Activated CD4-positive, alpha-beta memory T cell treated with anti-CD3 and anti-CD28 coated beads, Interleukin-2, amount 10 ng/mL, durations not matched to agents 7 days and 5 days (primary cell): ENCODE measurements at regions of chr10 and their contacts with region 1.

Region 1: GRCh38 chr10:100046021-100046486 is 35.6 kb downstream of the CPN1 start:
- DNase-seq: peak; percentile 82
- H3K4me3 Mint-ChIP-seq: no peak overlapping the region
- H3K27ac Mint-ChIP-seq: no peak overlapping the region
- H3K4me1 Mint-ChIP-seq: peaks cover 2% of the 10 kb centered on the region
- H3K27me3 Mint-ChIP-seq: peaks cover 16% of the 10 kb centered on the region

Region 2: GRCh38 chr10:99993701-99994689 is 52.1 kb before region 1 on chr10:
- CTCF ChIA-PET with region 1: interaction called, 14 read pairs
- POLR2A ChIA-PET with region 1: no interaction called
- DNase-seq: peak; percentile 70
- H3K4me3 Mint-ChIP-seq: no peak overlapping the region
- H3K27ac Mint-ChIP-seq: no peak overlapping the region
- H3K4me1 Mint-ChIP-seq: peaks cover 20% of the 10 kb centered on the region
- H3K27me3 Mint-ChIP-seq: no peaks in the 10 kb centered on the region

Region 3: DNA sequence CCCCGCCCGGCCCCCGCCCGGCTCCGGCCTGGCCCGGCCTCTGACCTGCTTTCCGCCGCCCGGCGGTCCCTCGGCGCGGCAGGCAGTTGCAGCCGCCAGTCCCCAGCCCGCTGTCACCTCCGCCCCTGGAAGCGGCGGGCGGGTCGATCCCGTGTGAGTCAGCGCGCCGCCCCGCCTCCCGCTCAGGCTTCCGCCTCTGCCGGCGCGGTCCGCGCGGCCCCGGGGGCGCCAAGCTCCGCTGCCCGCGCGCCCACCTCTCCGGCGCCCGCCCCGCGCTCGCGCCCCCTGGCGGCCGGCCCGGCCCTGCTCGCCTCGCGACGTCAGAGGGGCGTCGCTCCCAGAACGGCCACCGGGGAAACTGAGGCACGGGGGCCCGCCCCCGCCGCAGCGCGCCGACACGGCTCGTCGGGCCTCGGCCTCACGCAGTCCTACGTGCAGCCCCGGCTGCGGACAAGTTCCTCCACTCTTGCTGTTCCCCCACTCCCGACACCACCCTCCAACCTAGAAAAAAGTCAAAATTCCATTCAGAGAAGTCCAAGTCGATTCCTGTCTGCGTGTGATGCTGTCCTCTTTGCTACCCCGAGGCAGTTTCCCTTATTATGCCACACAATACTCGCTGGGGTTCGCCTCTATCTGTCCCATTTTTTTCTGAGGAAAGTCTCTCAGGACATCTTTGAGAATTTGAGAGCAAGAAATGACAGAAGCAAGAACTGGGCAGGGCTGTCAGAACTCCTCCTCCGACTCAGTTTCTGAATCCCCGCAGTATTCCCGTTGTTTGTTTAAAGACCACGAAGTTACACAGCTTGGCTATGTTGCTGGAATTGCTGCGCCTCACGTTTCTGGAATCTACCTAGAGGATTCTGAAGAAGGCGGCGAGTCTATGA is 36.0 kb before region 1 on chr10 and contains the start of gene DNMBP:
- CTCF ChIA-PET with region 1: interaction called, 10 read pairs
- POLR2A ChIA-PET with region 1: no interaction called
- DNase-seq: peak; percentile 83
- H3K4me3 Mint-ChIP-seq: peak within 1 kb of the TSS; percentile 83
- H3K27ac Mint-ChIP-seq: no peak within 1 kb of the TSS
- H3K4me1 Mint-ChIP-seq: peaks cover 49% of the 10 kb centered on the region
- H3K27me3 Mint-ChIP-seq: peaks cover 25% of the 10 kb centered on the region
- total RNA-seq, gene DNMBP: 4.8 to 5.1 TPM

Region 4: DNA sequence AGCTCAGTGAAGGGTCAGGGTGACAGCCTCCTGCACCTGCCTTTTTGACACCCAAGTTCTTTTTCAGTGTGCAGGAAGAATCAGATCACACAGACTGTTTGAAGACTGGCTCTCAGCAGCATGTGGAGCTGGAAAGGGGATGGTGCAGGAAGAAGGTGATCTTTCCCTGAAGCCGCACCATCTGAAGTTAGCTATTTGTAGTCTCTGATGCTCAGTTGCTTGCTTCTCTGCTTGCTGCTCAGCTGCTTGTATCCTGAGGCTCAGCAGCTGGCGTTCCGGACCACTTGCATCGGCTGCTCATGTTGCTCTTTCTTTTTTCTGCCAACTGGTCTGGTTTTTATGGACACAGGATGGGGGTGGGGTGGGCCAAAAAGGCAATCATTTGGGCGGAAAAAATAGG is 20.5 kb before region 1 on chr10:
- CTCF ChIA-PET with region 1: interaction called, 19 read pairs
- POLR2A ChIA-PET with region 1: no interaction called
- DNase-seq: no peak
- H3K4me3 Mint-ChIP-seq: no peak overlapping the region
- H3K27ac Mint-ChIP-seq: no peak overlapping the region
- H3K4me1 Mint-ChIP-seq: peaks cover under 1% of the 10 kb centered on the region
- H3K27me3 Mint-ChIP-seq: peaks cover 10% of the 10 kb centered on the region